MCF 10A (cell line): ENCODE measurements at regions of chr1 and their contacts with region 1.

Region 1: DNA sequence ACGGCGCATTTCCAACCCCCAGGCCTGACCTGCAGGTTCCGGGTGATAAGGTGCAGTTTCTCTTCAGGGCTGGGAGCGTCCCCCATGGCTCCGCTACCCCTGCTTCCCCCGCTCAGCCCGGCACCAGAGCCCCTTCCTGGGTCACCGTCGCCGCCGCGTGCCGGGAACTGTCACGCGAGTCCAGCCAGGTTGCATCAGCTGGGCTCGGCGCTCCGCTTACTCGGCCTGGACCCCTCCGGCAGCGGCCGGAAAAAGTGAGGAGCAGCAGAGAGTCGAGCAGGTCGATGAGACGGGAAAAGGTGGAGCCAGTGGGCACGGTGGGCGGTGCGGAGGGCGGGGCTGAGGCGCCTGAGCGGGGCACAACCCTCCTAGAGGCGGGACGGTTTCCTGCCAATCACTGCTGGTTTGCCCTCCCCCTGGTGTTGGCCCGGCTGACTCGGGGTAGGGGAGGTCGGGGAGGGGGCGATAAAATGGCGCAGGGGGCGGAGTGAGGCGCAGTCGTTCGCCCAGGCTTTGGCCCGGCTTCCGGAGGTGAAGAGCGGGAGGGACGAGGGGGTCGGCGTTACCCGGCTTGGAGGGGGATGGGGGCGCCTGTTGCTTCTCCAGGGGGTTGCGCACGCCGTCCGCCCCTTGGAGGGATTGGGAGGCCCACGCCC is at the starts of genes S100PBP and YARS1:
- DNase-seq: peak; percentile 98
- H3K4me3 Mint-ChIP-seq: peak within 1 kb of the TSS; percentile 87
- H3K27ac Mint-ChIP-seq: peak within 1 kb of the TSS; percentile 87
- H3K4me1 Mint-ChIP-seq: peaks cover 27% of the 10 kb centered on the region
- H3K27me3 Mint-ChIP-seq: no peaks in the 10 kb centered on the region
- CTCF ChIP-seq: no peak
- total RNA-seq, gene S100PBP: 24.4 and 34.1 TPM in 2 replicates
- total RNA-seq, gene YARS1: 347 and 372 TPM in 2 replicates

Region 2: DNA sequence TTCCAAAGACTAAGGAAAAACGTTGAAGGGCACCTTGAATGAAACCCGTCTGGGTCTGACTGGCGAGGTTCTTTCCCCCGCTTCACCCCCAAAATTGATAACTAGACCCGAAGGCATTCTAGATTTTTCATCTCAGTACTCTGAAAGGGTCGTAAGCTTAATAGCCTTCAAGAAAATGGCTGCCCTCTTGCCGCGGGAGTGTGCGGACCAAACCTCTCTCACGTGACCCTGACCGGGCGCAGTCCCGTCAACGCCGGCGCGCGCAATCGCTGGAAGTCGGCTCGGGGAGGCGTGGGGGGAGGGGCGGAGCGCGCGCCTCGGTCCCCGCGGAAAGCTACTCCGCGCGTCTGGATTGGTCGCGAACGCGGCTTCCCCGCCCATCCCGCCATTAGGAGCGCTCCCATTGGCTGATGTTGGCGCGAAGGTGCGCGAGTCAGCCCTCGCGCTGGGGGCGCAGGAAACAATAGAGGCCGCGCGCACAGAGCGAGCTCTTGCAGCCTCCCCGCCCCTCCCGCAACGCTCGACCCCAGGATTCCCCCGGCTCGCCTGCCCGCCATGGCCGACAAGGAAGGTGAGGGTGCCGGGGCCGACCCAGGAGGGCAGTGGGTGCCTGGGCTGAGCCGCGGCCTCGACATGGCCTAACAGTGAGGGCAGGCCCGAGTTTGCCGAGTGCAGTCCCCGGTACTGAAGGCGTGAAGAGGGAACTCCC is 166.4 kb before region 1 on chr1 and contains the start of gene RBBP4:
- CTCF ChIA-PET with region 1: no interaction called
- POLR2A ChIA-PET with region 1: interaction called, 17 read pairs
- intact Hi-C with region 1: no loop called
- DNase-seq: peak; percentile 96
- H3K4me3 Mint-ChIP-seq: peak within 1 kb of the TSS; percentile 97
- H3K27ac Mint-ChIP-seq: peak within 1 kb of the TSS; percentile 100
- H3K4me1 Mint-ChIP-seq: peaks cover 14% of the 10 kb centered on the region
- H3K27me3 Mint-ChIP-seq: no peaks in the 10 kb centered on the region
- CTCF ChIP-seq: no peak
- total RNA-seq, gene RBBP4: 165 and 179 TPM in 2 replicates

Region 3: DNA sequence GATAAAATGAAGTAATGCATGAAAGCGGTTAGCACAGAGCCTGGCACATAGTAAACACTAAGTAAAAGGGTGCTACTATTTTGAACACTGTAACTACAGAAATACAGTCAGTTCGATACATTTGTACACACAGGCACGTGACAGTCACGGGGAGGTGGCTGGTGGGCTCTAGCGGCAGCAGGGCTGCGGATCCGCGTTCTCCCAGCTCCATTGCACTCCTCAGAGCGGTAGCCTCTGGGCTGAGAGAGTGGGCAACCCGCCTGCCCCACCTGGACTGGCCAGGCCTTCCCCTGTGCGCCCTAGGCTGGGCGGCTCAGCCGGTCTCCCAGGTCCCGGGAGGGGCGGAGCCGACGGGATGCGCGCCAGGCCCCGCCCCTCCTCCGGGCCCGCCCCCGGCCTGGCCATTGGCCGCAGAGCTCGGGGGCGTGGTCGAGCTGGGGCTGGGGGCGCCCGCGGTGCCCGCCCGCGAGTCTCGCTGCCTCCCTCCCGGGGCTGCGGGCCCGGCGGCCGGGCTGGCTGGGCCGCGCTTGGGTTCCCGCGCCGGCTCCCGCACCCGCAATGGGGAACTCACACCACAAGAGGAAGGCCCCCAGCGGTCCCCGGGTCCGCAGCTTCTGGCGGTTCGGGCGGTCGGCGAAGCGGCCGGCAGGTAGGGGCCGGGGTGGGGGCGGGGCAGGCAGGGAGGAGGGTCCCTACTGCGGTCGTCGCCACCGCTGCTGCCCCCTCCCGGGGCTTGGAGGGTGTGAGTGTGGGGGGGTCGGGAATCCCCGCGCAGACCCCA is 63.6 kb before region 1 on chr1:
- CTCF ChIA-PET with region 1: no interaction called
- POLR2A ChIA-PET with region 1: interaction called, 14 read pairs
- intact Hi-C with region 1: no loop called
- DNase-seq: peak; percentile 74
- H3K4me3 Mint-ChIP-seq: peak overlapping the region; percentile 96
- H3K27ac Mint-ChIP-seq: no peak overlapping the region
- H3K4me1 Mint-ChIP-seq: peaks cover 16% of the 10 kb centered on the region
- H3K27me3 Mint-ChIP-seq: no peaks in the 10 kb centered on the region
- CTCF ChIP-seq: no peak

Region 4: GRCh38 chr1:32780628-32781267 is 36.5 kb before region 1 on chr1:
- CTCF ChIA-PET with region 1: interaction called, 3 read pairs
- POLR2A ChIA-PET with region 1: interaction called, 17 read pairs
- intact Hi-C with region 1: no loop called
- DNase-seq: peak; percentile 90
- H3K4me3 Mint-ChIP-seq: no peak overlapping the region
- H3K27ac Mint-ChIP-seq: peak overlapping the region; percentile 57
- H3K4me1 Mint-ChIP-seq: peaks cover 13% of the 10 kb centered on the region
- H3K27me3 Mint-ChIP-seq: no peaks in the 10 kb centered on the region
- CTCF ChIP-seq: no peak

Region 5: GRCh38 chr1:32791881-32792280 is 25.4 kb before region 1 on chr1:
- CTCF ChIA-PET with region 1: interaction called, 3 read pairs
- POLR2A ChIA-PET with region 1: interaction called, 18 read pairs
- intact Hi-C with region 1: no loop called
- DNase-seq: peak; percentile 58
- H3K4me3 Mint-ChIP-seq: no peak overlapping the region
- H3K27ac Mint-ChIP-seq: peak overlapping the region; percentile 44
- H3K4me1 Mint-ChIP-seq: peaks cover 12% of the 10 kb centered on the region
- H3K27me3 Mint-ChIP-seq: no peaks in the 10 kb centered on the region
- CTCF ChIP-seq: no peak

Region 6: DNA sequence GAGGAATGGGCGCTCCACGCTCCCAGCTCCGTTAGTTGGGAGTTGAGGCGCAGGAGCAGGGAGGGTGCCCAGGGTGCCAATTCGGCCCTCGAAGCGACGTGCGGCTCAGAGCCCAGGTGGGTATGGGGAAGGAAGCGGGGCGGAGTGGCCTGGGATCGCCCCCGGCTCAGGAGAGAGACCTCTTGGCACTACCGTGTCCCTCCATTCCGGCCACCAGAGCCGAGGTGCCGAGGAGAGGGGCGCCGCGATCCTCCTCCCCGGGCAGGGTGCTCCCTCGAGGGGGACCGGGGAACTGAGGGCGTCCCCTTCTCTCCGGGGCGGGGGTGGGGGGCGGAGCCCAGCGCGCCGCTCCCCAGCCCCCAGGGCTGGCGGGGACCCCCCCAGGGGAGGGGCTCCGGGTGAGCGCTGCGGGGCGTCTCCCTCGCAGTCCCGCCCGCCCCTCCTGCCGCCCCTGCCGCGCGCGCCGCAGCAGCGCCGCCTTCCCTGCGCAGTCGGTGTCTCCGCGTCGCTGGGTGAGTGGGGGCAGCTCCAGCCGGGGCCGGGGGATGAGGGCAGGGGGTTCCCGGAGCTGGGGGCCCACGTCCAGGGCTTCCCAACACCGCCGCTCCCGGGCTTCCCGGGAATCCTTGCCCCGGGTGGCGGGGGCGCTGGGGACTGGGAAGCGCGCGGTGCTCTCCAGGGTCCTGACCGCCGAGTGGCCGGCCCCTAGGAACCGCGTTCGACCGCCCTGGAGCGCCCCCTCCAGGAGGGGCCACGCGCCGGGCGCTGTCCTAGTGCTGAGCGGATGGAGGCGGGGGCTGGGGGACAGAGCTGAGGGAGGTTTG is 68.9 kb after region 1 on chr1 and contains the start of gene HPCA:
- CTCF ChIA-PET with region 1: no interaction called
- POLR2A ChIA-PET with region 1: no interaction called
- intact Hi-C with region 1: no loop called
- DNase-seq: peak; percentile 18
- H3K4me3 Mint-ChIP-seq: no peak within 1 kb of the TSS
- H3K27ac Mint-ChIP-seq: no peak within 1 kb of the TSS
- H3K4me1 Mint-ChIP-seq: no peaks in the 10 kb centered on the region
- H3K27me3 Mint-ChIP-seq: peaks cover 60% of the 10 kb centered on the region
- CTCF ChIP-seq: peak; percentile 41
- total RNA-seq, gene HPCA: not detected in 2 replicates

Region 7: DNA sequence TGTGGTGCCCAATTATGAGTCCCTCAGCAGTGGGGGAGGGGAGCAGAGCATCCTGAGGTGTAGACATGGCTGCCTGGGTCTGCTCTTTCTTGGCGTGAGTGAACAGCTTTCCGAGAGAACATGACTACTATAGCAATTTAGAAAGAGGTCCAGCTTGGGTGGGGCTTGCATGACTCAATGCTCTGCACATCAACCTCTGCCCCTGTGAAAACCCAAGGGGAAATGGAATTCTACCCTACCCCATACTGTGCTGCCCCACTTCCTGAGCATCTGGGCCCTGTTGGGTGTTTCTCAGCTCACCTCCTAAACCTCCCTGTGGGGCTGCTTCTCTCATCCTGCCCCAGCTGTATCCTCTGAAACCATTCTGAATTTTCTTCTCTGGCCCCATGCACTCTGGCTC is 255.4 kb after region 1 on chr1:
- CTCF ChIA-PET with region 1: no interaction called
- POLR2A ChIA-PET with region 1: no interaction called
- intact Hi-C with region 1: no loop called
- DNase-seq: no peak
- H3K4me3 Mint-ChIP-seq: no peak overlapping the region
- H3K27ac Mint-ChIP-seq: no peak overlapping the region
- H3K4me1 Mint-ChIP-seq: peaks cover 8% of the 10 kb centered on the region
- H3K27me3 Mint-ChIP-seq: no peaks in the 10 kb centered on the region
- CTCF ChIP-seq: no peak

Region 8: DNA sequence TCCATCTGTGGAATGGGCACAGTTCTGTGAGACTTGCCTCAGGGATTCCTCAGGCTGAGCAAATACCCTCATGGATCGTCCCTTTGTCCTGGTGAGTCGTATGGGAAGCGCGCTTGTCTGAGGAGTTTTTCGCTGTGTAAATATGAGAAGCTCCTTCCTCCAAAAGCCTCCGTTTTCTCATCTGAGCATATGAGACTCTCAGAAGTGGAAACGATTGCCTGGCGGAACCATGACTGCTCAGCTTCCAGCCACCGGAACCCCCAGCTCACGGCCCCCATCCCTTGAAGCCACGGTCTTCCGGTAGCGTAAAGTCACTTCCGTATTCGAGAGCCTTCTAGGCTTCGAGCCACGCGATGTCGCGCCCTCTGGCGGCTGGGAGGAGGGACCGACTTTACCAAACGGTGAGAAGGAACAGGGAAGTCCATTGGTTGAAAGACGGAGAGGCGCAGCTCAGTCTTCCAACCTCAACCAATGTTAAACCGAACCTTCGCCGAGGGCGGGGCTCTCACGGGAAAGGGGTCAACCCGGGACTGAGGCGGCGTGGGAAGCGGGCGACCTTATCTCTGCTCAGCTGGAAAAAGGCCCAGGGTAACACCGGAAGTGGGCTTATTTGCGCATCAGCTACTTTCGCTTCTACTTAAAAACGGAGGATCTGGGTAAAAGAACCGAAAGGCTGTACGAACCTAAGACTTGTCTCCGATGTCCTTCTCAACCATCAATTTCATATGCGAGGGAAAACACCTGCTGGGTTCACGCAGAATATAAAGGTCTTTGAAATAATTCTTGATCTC is 309.9 kb after region 1 on chr1:
- CTCF ChIA-PET with region 1: no interaction called
- POLR2A ChIA-PET with region 1: no interaction called
- intact Hi-C with region 1: no loop called
- DNase-seq: peak; percentile 98
- H3K4me3 Mint-ChIP-seq: peak overlapping the region; percentile 95
- H3K27ac Mint-ChIP-seq: peak overlapping the region; percentile 97
- H3K4me1 Mint-ChIP-seq: peaks cover 30% of the 10 kb centered on the region
- H3K27me3 Mint-ChIP-seq: no peaks in the 10 kb centered on the region
- CTCF ChIP-seq: peak; percentile 85